ENCODE measurements at regions of chr12 and their contacts with region 1.

Region 1: GRCh38 chr12:27057543-27057942 is 24.8 kb downstream of the C12orf71 start:
- DNase-seq: no peak
- H3K4me3 ChIP-seq: no peak overlapping the region
- H3K27ac ChIP-seq: no peak overlapping the region
- H3K4me1 ChIP-seq: no peaks in the 10 kb centered on the region
- H3K27me3 ChIP-seq: no peaks in the 10 kb centered on the region
- CTCF ChIP-seq: no peak

Region 2: GRCh38 chr12:27109334-27110028 is 51.9 kb after region 1 on chr12:
- intact Hi-C with region 1: loop called (anchors 10 kb)
- DNase-seq: no peak
- H3K4me3 ChIP-seq: no peak overlapping the region
- H3K27ac ChIP-seq: no peak overlapping the region
- H3K4me1 ChIP-seq: no peaks in the 10 kb centered on the region
- H3K27me3 ChIP-seq: no peaks in the 10 kb centered on the region
- CTCF ChIP-seq: no peak